Common myeloid progenitor, CD34-positive (primary cell): ENCODE measurements at regions of chr3 and their contacts with region 1.

Region 1: DNA sequence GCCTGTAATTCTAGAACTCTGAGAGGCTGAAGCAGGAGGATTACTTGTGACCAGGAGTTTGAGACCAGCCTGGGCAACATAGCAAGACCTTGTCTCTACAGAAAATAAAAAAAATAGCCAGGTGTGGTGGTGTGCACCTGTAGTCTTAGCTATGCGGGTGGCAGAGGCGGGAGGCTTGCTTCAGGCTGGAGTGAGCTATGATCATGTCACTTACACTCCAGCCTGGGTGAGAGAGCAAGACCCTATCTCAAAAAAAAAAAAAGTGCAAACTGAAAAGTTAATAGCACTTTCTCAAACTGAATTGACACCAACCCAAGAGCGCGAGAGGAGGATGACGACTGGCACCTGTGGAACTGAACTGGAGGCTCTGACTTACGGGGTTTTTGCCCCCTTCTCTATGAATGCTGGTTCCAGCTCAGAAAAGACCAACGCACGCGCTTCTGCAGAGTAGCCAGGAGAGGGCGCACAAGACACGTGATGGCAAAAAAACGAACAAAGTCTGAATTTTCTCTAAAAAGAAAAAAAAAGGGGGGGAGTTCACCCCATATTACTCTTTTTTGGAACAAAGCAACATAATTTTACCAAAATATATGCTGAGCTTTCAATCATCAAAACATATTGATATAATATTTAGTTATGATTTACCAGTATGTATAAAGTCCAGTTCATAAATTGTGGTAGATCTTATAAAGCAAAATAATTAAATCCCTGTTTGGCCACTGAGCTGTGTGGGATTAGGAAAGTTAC is 23.7 kb downstream of the CFAP92 start:
- DNase-seq: peak; percentile 61 to 81 (median 79)
- H3K4me3 ChIP-seq: no peak overlapping the region
- H3K27ac ChIP-seq: no peak overlapping the region
- H3K4me1 ChIP-seq: peaks cover 6 to 26% (median 21%) of the 10 kb centered on the region in 4 experiments
- H3K27me3 ChIP-seq: no peaks in the 10 kb centered on the region

Region 2: DNA sequence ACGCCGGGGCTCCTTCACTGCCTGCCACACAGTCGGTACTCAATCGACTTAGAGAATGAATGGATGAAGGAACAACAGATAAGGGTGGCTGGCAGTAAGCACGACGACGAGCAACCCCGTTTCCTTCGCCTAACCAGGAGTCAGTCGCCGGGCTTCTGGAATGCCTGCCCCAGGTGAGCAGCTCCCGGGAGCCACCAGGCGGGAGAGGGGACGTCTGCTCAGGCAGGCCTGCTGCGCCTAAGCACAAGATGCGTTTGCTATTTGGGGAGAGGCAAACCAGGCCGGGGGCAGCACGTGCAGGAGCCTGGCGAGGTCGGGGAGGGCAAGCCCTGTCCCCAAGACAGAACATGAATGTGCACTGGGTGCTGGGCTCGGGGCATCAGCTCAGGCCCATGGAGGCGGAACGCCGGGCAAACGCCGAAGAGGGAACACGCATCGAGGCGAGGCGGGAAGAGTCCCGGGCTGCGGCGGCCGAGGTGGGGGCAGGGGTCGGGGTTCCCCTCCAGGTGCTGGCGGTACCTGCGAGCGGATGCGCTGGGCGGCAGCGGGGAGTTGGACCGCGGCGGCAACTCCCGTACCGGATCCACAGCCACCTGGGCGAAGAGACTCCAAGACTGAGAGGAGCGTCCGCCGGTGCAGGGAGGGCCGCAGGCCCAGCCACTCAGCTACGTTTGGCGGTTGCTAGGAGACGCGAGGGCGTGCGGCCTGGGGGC is 23.5 kb after region 1 on chr3 and contains the start of gene CFAP92:
- CTCF ChIA-PET with region 1: interaction called, 31 read pairs
- POLR2A ChIA-PET with region 1: no interaction called
- DNase-seq: peak; percentile 78 to 91 (median 90)
- H3K4me3 ChIP-seq: peak within 1 kb of the TSS in 5 of 7 experiments; percentile 31 to 76 (median 55)
- H3K27ac ChIP-seq: no peak within 1 kb of the TSS
- H3K4me1 ChIP-seq: peaks cover 15 to 54% (median 43%) of the 10 kb centered on the region in 4 experiments
- H3K27me3 ChIP-seq: no peaks in the 10 kb centered on the region

Region 3: GRCh38 chr3:129026728-129027543 is 56.8 kb after region 1 on chr3:
- CTCF ChIA-PET with region 1: interaction called, 46 read pairs
- POLR2A ChIA-PET with region 1: interaction called, 5 read pairs
- DNase-seq: peak; percentile 93 to 98 (median 97)
- H3K4me3 ChIP-seq: peak overlapping the region; percentile 35 to 76 (median 55)
- H3K27ac ChIP-seq: peak overlapping the region in 1 of 2 experiments; percentile 49
- H3K4me1 ChIP-seq: peaks cover 0 to 30% (median 22%) of the 10 kb centered on the region in 4 experiments
- H3K27me3 ChIP-seq: no peaks in the 10 kb centered on the region

Region 4: DNA sequence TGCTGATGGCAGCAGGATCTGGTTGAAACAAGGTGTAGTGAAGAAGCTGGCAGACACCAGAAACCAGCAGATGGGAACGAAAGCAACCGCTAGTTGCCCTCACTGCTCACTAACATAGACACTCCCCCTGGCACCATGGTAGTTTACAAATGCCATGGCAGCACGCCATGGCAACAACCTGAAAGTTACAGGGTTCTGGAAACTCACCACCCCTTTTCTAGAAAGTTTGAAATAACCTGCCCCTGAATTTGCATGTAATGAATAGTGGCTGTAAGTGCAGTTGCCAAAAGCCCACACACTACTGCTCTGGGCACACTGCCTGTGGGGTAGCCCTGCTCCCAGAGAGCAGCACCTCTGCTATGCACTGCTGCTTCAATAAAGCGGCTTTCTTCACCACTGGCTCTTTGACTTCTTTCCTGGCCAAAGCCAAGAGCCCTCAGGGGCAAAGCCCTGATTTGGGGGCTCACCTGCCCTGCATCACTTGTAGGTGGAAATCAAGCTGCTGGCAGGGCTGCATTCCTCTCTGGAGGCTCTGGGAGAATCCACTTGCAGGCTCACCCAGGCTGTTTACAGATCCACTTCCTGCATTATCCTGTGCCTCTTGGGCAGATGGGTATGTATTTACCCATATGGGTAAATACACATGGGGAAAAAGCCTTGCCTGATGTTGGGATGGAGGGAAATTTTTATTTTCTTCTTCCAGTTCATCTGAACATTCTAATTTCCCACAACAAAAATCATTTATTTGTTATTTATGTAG is 88.5 kb after region 1 on chr3:
- CTCF ChIA-PET with region 1: interaction called, 72 read pairs
- POLR2A ChIA-PET with region 1: no interaction called
- DNase-seq: peak in 2 of 3 donors; percentile 75 to 80
- H3K4me3 ChIP-seq: no peak overlapping the region
- H3K27ac ChIP-seq: no peak overlapping the region
- H3K4me1 ChIP-seq: peaks cover 0 to 47% (median 36%) of the 10 kb centered on the region in 4 experiments
- H3K27me3 ChIP-seq: no peaks in the 10 kb centered on the region

Region 5: GRCh38 chr3:129121792-129122411 is 151.7 kb after region 1 on chr3 and contains the start of gene RAB43:
- CTCF ChIA-PET with region 1: interaction called, 10 read pairs
- POLR2A ChIA-PET with region 1: no interaction called
- DNase-seq: peak; percentile 81 to 88 (median 86)
- H3K4me3 ChIP-seq: peak within 1 kb of the TSS; percentile 58 to 90 (median 78)
- H3K27ac ChIP-seq: peak within 1 kb of the TSS in 1 of 2 experiments; percentile 66
- H3K4me1 ChIP-seq: peaks cover 11 to 58% (median 46%) of the 10 kb centered on the region in 4 experiments
- H3K27me3 ChIP-seq: no peaks in the 10 kb centered on the region